ENCODE measurements at regions of chr4 and their contacts with region 1.

Region 1: DNA sequence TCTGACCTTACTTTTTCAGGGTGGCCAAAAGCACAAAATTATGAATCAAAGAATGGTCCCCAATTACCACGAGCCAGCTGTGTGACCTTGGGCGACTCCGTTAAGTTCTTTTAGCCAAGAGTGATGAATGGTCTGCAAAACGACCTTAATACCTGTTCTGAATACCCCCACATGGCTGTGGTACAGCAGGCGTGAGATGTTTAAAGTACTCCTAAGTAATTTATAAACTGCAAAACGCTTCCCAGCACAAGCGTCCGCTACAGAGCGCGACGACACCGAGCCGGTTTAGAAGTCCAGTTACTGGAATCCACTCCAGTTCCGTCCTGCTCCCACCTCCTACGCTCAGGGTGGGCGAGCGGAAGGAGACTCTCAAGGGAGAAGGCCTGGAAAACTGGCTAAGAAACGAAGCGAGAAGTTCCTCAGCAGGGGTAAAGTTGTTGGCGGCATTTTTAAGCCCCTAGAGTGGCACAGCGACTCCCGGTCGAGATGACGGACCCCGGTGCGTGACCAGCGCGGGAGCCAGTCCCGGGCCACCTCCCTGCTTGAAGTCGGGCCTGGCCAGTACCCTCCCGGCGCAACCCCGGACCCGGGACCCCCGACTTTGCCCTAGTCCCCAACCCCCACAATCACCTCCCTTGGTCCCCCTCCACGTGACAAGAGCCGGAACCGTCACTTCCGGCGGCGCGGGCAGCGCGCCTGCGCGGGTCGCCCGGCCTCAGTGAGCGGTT is 683 bp upstream of the BMP2K start:
- DNase-seq: peak; percentile 83
- H3K4me3 Mint-ChIP-seq: peak overlapping the region; percentile 93
- H3K27ac Mint-ChIP-seq: peak overlapping the region; percentile 96
- H3K4me1 Mint-ChIP-seq: peaks cover 32% of the 10 kb centered on the region
- H3K27me3 Mint-ChIP-seq: no peaks in the 10 kb centered on the region

Region 2: GRCh38 chr4:78612398-78613178 is 162.9 kb before region 1 on chr4:
- intact Hi-C with region 1: loop called (anchors 2 kb)
- DNase-seq: no peak
- H3K4me3 Mint-ChIP-seq: no peak overlapping the region
- H3K27ac Mint-ChIP-seq: no peak overlapping the region
- H3K4me1 Mint-ChIP-seq: peaks cover 45% of the 10 kb centered on the region
- H3K27me3 Mint-ChIP-seq: peaks cover 8% of the 10 kb centered on the region

Region 3: DNA sequence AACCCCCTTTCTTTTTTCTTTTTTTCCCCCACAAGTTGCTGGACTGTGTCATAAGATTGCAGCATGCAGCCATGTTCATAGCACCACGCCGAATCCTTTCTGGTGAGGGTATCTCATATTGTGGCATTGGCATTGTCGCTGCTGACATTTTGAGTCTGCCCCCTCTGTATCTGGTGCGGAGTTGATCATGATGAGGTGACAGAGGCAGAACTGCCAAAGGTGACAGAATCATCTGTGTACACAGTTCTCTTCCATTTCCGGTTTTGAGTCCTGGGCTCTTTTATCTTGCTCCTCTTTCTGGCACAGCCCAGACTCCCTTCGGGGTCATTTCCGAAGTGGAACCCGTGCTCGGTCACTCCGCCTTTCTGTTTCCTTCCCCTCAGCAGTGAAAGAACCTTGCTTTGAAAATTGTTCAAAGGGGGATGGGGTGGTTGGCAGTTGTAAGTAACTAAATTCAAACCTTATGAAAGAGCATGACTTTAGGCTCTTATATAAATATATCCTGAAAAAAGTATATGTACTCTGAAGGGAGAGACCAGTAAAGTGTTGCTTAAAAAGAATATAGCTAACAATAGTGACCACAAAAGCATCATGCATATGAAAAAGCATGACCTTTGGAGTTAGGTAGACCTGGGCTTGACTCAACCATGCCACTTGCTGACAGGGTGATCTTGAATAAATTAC is 54.3 kb before region 1 on chr4:
- intact Hi-C with region 1: loop called (anchors 5 kb)
- DNase-seq: peak; percentile 14
- H3K4me3 Mint-ChIP-seq: peak overlapping the region; percentile 34
- H3K27ac Mint-ChIP-seq: peak overlapping the region; percentile 30
- H3K4me1 Mint-ChIP-seq: peaks cover 18% of the 10 kb centered on the region
- H3K27me3 Mint-ChIP-seq: peaks cover 6% of the 10 kb centered on the region

Region 4: GRCh38 chr4:78864405-78865024 is 89.0 kb after region 1 on chr4:
- intact Hi-C with region 1: loop called (anchors 5 kb)
- DNase-seq: no peak
- H3K4me3 Mint-ChIP-seq: no peak overlapping the region
- H3K27ac Mint-ChIP-seq: no peak overlapping the region
- H3K4me1 Mint-ChIP-seq: peaks cover 2% of the 10 kb centered on the region
- H3K27me3 Mint-ChIP-seq: no peaks in the 10 kb centered on the region

Region 5: DNA sequence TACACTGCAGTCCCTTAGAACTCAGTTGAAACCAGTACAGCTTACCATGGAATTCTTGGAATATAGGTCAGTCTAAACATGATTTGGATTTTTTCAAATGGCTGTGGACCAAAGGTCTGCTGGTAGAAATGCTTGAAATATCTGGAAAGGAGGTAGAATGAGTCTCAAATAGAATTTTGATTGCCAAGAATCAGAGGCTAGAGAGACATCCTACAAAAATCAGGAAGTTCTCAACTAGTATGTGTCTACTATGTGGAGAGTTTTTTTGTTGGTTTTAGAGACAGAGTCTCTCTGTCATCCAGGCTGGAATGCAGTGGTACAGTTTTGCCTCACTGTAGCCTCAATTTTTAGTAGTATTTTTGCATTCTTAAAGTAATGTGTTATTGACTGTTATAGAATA is 110.1 kb after region 1 on chr4:
- intact Hi-C with region 1: no loop called
- DNase-seq: no peak
- H3K4me3 Mint-ChIP-seq: no peak overlapping the region
- H3K27ac Mint-ChIP-seq: no peak overlapping the region
- H3K4me1 Mint-ChIP-seq: peaks cover 6% of the 10 kb centered on the region
- H3K27me3 Mint-ChIP-seq: no peaks in the 10 kb centered on the region

Region 6: GRCh38 chr4:78938868-78939666 is 163.6 kb after region 1 on chr4 and contains the start of gene PAQR3:
- intact Hi-C with region 1: loop called (anchors 2 kb)
- DNase-seq: peak; percentile 77
- H3K4me3 Mint-ChIP-seq: peak within 1 kb of the TSS; percentile 91
- H3K27ac Mint-ChIP-seq: peak within 1 kb of the TSS; percentile 63
- H3K4me1 Mint-ChIP-seq: peaks cover 35% of the 10 kb centered on the region
- H3K27me3 Mint-ChIP-seq: peaks cover 26% of the 10 kb centered on the region
- total RNA-seq, gene PAQR3: 11.0 and 13.1 TPM in 2 replicates